RWPE1 (cell line): ENCODE measurements at regions of chr14 and their contacts with region 1.

Region 1: GRCh38 chr14:21014761-21015190 is 10.1 kb downstream of the NDRG2 start:
- DNase-seq: peak; percentile 75
- H3K27ac ChIP-seq: no peak overlapping the region
- CTCF ChIP-seq: peak; percentile 90

Region 2: GRCh38 chr14:20516906-20517305 is 497.9 kb before region 1 on chr14:
- CTCF ChIA-PET with region 1: no interaction called
- POLR2A ChIA-PET with region 1: no interaction called
- DNase-seq: peak; percentile 33
- H3K27ac ChIP-seq: no peak overlapping the region
- CTCF ChIP-seq: no peak

Region 3: DNA sequence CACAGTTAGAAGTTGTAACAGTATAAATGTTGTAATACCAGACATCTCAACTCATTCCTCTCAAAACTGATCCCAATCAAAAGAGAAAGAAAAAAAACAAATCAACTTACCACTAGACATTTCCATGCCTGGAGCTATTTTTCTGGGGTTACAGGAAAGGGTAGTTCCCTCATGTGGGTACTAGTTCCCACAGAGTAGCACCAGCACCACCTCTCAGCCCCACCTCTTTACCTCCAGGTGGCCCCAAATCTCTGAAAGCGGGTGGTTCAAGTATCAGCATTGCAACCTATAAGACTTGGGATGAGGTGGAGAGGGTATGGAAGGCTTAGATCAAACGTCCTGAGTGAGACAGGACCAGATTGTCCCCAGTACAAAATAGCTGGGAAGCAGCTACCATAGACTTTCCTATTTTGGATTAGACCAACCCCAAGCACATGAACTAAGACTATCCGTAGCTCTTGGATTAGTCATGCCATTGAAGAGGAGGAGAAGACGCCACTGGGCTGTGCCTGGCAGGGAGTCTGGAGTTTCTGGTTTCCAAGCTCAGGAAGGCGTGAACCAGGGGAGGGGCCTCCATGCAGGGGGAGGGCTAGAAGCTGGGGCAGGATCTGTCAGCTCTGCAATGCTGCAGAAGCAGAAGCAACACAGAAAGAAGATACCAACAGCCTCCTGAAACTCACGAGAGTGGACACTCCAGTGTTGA is 16.0 kb before region 1 on chr14 and contains the start of gene SLC39A2:
- CTCF ChIA-PET with region 1: interaction called, 23 read pairs
- POLR2A ChIA-PET with region 1: no interaction called
- DNase-seq: peak; percentile 42
- H3K27ac ChIP-seq: no peak within 1 kb of the TSS
- CTCF ChIP-seq: no peak

Region 4: DNA sequence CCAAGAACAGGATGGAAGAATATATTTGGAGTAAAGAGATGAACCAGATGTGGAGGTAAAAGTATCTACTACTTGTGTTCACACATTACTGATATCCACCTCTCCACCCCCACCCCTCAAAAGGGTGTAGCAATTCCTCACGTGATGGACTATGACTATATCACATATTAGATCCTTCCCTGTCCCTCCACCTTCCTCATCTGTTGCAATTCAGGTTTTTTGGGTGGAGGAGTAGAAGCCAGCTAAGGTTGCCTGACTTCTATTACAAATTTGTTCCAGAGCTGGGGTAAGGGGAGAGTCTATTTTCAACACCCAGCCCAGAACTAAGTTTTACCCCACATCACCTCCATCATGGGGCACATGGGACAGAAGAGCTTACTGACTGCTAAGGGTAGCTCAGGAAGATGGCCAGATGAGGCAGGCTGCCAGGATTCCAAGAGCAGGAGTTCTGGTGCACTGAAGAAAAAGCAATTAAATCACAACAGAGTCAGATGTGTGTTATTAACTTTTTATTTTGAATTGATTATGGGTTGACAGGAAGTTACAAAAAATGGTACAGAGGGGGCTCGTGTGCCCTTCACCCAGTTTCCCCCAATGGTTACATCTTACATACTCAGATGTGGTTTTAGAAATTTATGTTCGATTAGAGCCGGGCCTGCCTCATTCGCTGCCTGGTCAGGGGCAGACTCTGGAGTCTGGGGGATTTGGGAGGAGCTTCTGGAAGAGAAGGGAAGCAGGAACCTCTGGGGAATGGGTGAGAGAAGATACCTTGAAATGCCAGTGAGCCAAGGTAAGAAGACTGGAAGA is 17.8 kb after region 1 on chr14:
- CTCF ChIA-PET with region 1: interaction called, 20 read pairs
- POLR2A ChIA-PET with region 1: no interaction called
- DNase-seq: no peak
- H3K27ac ChIP-seq: no peak overlapping the region
- CTCF ChIP-seq: no peak

Region 5: DNA sequence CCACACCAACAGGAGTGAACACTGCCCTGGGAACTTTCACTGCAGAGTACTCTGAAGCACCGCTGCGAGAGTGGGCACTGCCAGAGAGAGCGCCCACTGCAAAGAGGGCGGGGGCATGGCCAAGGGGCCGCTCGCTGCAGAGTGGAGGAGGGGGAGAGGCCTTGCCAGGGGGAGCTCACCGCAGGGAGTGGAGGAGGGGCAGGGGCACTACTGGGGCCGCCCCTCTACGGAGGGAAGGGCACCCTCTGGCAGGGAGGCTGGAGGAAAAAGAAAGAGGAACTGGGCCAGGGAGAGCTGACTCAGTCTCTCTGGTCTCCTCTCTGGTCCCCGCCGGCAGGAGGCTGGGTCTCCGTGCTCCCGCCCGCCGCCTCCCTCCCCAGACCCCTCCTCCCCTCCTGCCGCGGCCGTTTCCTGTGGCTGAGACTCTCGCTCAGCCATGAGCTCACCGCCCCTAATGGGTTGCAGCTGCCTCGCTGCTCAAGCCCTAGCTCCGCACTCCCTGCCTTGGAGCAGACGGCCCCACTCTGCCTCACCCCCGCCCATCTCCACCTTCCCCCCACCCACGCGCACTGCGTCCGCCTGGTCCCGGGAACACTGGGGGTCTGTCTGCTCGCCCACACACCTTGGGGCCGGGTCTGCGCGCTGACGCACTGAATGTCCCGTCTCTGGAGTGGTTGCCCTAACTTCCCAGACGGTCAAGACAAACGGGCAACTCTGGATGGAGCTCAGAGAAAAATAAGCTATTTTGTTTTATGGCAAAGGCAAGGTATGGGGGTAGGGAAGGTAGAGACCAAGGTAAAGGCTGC is 56.7 kb after region 1 on chr14:
- CTCF ChIA-PET with region 1: interaction called, 15 read pairs
- POLR2A ChIA-PET with region 1: no interaction called
- DNase-seq: peak; percentile 42
- H3K27ac ChIP-seq: peak overlapping the region; percentile 83
- CTCF ChIP-seq: no peak

Region 6: DNA sequence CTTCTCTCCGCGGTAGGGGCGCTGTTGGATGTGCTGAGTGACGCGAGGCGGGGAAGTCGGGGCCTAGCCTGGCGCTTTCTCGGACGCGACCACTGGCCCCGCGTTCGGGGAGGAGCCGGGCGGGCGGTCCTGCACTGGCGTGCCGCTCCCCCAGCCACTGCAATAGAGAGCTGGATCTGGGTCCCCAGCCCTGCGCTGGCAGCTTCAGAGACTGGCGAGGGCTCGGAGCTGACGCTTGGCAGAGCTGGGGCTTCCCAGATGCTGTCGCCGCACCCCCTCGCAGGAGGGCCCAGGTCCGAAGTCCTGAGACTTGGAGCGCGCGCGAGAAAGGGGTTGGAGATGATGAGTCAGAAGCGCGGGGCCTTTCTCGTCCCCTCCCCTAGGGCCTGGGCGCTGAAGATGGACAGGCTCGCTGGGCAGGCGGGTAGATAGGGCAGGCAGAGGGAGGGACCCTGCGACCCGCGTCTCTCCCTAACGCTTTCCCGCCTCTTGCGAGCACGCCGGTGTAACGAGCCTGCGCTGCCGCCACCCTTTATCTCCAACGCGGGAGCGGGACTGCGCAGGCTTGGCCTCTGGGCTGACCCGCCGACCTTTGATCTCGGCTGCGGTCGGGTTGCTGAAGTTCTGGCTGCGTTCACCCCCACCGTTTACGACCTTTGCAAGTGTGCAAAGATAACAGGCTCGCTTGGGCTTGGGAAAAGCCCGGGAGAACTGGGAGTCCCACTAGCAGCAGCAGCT is 89.1 kb after region 1 on chr14:
- CTCF ChIA-PET with region 1: interaction called, 22 read pairs
- POLR2A ChIA-PET with region 1: no interaction called
- DNase-seq: peak; percentile 95
- H3K27ac ChIP-seq: peak overlapping the region; percentile 98
- CTCF ChIP-seq: no peak

Region 7: GRCh38 chr14:21121106-21121505 is 106.3 kb after region 1 on chr14:
- CTCF ChIA-PET with region 1: no interaction called
- POLR2A ChIA-PET with region 1: no interaction called
- DNase-seq: no peak
- H3K27ac ChIP-seq: no peak overlapping the region
- CTCF ChIP-seq: no peak

Region 8: DNA sequence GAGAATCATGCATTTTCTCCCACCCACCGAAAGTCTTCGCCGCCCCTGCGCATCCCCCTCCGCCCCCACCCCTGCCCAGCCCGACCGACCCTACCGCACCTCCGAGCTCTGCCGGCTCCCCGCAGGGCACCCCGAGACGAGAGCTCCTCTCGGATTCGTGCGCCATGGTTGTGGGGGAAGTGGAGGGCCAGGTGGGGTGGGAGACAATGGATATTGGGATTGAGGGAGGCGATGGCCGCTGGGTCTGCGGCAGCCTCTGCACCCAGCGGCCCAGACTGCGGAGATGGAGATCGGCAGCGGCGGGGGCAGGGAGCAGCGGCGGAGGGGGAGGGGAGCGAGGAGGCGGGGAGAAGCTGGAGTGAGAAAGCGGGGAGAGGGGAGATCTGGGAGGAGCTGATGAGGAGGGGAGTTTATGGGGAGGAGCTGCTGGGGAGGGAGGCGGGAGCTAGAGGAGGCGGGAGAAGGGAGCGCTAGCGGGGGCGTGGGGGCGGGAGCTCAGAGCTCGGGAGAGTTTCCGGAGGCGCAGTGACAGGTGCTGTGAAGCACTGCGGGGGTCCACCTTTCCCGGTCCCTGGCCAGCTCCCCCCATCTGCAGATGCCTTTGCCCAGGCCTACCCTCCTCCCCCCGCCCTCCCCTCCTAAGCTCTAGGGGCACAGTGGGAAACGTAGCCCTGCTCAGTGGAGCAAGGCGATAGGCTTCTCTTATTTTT is 511.3 kb after region 1 on chr14 and contains the start of gene SALL2:
- CTCF ChIA-PET with region 1: no interaction called
- POLR2A ChIA-PET with region 1: no interaction called
- DNase-seq: peak; percentile 38
- H3K27ac ChIP-seq: no peak within 1 kb of the TSS
- CTCF ChIP-seq: no peak